ENCODE measurements at regions of chr17 and their contacts with region 1.

Region 1: DNA sequence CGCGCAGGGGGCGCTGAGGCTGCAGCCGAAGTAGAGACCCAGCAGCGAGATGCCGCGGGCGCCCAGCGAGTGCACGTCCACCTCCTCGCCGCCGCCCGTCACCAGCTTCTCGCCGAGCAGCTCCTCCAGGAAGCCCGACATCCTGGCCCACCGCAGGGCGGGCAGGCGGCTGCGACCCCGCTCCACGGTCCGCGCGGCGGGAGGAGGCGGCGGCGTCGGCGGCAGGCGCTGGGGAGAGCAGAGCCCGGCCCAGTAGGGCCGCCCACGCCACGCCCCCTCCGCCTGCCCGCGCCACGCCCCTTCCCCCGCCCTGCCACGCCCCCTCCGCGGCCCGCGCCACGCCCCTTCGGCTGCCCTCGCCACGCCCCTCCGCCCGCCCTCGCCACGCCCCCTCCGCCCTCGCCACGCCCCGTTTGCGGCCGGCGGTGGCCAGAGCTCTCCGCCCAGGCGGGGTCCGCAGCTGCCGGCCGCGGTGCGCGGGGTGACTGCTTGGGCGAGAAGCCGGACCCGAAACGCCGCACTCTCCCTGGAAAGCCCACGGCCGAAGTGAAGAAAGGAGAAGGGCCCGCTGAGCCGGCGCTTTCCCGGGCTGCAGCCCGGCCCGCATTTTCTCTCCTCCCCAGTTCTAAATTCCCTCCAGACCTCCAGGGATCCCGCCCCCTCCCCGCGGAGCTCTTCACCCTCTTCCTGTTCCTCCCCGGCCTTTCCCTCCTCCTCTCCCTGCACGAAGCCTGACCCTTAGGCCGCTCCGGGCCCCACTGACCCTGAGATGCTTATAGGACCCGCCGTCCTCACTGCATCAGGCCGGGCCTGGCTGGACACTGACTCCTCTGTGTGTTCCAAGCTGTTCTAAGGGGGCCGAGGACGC is at the start of gene NXN:
- DNase-seq: no peak
- H3K4me3 ChIP-seq: peak within 1 kb of the TSS; percentile 87
- CTCF ChIP-seq: peak; percentile 47

Region 2: DNA sequence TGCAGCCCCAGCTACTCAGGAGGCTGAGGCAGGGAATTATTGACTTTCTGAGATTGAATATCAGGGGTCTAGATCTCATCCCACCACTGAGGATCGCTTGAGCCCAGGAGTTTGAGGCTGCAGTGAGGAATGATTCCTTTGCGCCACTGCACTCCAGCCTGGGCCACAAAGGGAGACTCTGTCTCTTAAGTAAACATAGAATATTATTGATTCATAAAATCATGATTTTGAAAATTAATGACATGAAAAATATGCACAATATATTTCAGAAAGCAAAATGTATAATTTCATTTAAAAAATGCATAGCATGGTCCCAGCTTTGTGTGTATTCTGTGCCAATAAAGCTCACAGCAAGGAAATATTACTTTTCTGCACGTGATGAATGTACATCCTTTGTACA is 263.5 kb before region 1 on chr17:
- CTCF ChIA-PET with region 1: interaction called, 13 read pairs
- POLR2A ChIA-PET with region 1: interaction called, 4 read pairs
- DNase-seq: no peak
- H3K4me3 ChIP-seq: no peak overlapping the region
- CTCF ChIP-seq: no peak

Region 3: GRCh38 chr17:760371-760770 is 219.4 kb before region 1 on chr17:
- CTCF ChIA-PET with region 1: interaction called, 53 read pairs
- POLR2A ChIA-PET with region 1: no interaction called
- DNase-seq: no peak
- H3K4me3 ChIP-seq: no peak overlapping the region
- CTCF ChIP-seq: no peak

Region 4: GRCh38 chr17:794876-795275 is 184.9 kb before region 1 on chr17:
- CTCF ChIA-PET with region 1: interaction called, 157 read pairs
- POLR2A ChIA-PET with region 1: interaction called, 4 read pairs
- DNase-seq: no peak
- H3K4me3 ChIP-seq: peak overlapping the region; percentile 3; the same call in 1 of the 2 replicates
- CTCF ChIP-seq: peak; percentile 79

Region 5: GRCh38 chr17:996554-997344 is 17.0 kb after region 1 on chr17 and contains the start of gene TIMM22:
- CTCF ChIA-PET with region 1: interaction called, 37 read pairs
- POLR2A ChIA-PET with region 1: interaction called, 3 read pairs
- DNase-seq: peak; percentile 88
- H3K4me3 ChIP-seq: peak within 1 kb of the TSS; percentile 100
- CTCF ChIP-seq: peak; percentile 92

Measured in AG04449 (cell line).